B cell (primary cell): ENCODE measurements at regions of chr19 and their contacts with region 1.

Region 1: GRCh38 chr19:2289714-2290435 is 7.9 kb upstream of the PEAK3 start:
- DNase-seq: peak; percentile 92
- ATAC-seq: peak; percentile 69
- H3K4me3 ChIP-seq: peak overlapping the region; percentile 30 to 82 (median 71)
- H3K4me3 Mint-ChIP-seq: peak overlapping the region; percentile 97
- H3K27ac ChIP-seq: peak overlapping the region; percentile 75 to 81
- H3K27ac Mint-ChIP-seq: peak overlapping the region; percentile 87
- H3K4me1 ChIP-seq: peaks cover 46 to 62% of the 10 kb centered on the region in 2 donors
- H3K4me1 Mint-ChIP-seq: peaks cover 51% of the 10 kb centered on the region
- H3K27me3 ChIP-seq: no peaks in the 10 kb centered on the region
- H3K27me3 Mint-ChIP-seq: no peaks in the 10 kb centered on the region
- CTCF ChIP-seq: no peak

Region 2: GRCh38 chr19:2253106-2254053 is 36.5 kb before region 1 on chr19:
- CTCF ChIA-PET with region 1: interaction called, 8 read pairs
- POLR2A ChIA-PET with region 1: interaction called, 10 read pairs
- intact Hi-C with region 1: loop called (anchors 5 kb)
- DNase-seq: peak; percentile 77
- ATAC-seq: peak; percentile 40
- H3K4me3 ChIP-seq: peak overlapping the region; percentile 30 to 70 (median 55)
- H3K4me3 Mint-ChIP-seq: peak overlapping the region; percentile 88
- H3K27ac ChIP-seq: no peak overlapping the region
- H3K27ac Mint-ChIP-seq: peak overlapping the region; percentile 65
- H3K4me1 ChIP-seq: peaks cover 54 to 68% of the 10 kb centered on the region in 2 donors
- H3K4me1 Mint-ChIP-seq: peaks cover 43% of the 10 kb centered on the region
- H3K27me3 ChIP-seq: peaks cover 0 to 38% (median 14%) of the 10 kb centered on the region in 4 experiments
- H3K27me3 Mint-ChIP-seq: no peaks in the 10 kb centered on the region
- CTCF ChIP-seq: peak; percentile 63

Region 3: GRCh38 chr19:2274931-2275535 is 14.8 kb before region 1 on chr19:
- CTCF ChIA-PET with region 1: interaction called, 30 read pairs
- POLR2A ChIA-PET with region 1: interaction called, 65 read pairs
- intact Hi-C with region 1: loop called (anchors 2 kb)
- DNase-seq: peak; percentile 75
- ATAC-seq: no peak
- H3K4me3 ChIP-seq: no peak overlapping the region
- H3K4me3 Mint-ChIP-seq: peak overlapping the region; percentile 59
- H3K27ac ChIP-seq: peak overlapping the region; percentile 18 to 41
- H3K27ac Mint-ChIP-seq: peak overlapping the region; percentile 84
- H3K4me1 ChIP-seq: peaks cover 37 to 53% of the 10 kb centered on the region in 2 donors
- H3K4me1 Mint-ChIP-seq: peaks cover 46% of the 10 kb centered on the region
- H3K27me3 ChIP-seq: no peaks in the 10 kb centered on the region
- H3K27me3 Mint-ChIP-seq: no peaks in the 10 kb centered on the region
- CTCF ChIP-seq: peak; percentile 48

Region 4: DNA sequence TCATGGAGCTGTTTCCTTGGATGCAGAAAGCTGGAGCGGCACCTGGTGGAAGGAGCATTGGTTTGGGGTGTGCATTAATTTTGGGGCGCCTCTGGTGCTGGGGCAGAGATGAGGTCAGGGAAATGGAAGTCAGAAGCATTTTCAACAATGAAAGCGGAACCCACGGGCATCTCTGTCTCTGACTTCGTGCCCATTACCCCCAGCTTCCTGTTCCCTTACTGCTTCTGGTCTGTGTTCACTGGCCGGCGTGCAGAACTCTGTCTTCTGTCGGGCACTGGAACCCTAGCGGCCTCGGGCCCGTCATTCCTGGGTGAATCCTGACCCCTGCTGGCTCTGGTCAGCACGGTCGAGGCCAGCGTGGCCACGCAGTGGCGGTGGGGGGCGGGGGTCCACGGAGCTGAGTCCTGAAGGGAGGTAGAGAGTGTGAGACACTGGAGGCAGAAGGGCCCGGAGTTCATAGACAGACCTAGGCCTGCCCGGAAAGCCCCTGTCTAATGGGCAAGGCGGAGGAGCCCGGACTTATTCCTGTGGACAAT is 26.0 kb after region 1 on chr19:
- CTCF ChIA-PET with region 1: interaction called, 7 read pairs
- POLR2A ChIA-PET with region 1: interaction called, 17 read pairs
- intact Hi-C with region 1: no loop called
- DNase-seq: peak; percentile 74
- ATAC-seq: peak; percentile 75
- H3K4me3 ChIP-seq: peak overlapping the region in 1 of 5 experiments; percentile 19
- H3K4me3 Mint-ChIP-seq: peak overlapping the region; percentile 74
- H3K27ac ChIP-seq: peak overlapping the region; percentile 62 to 75
- H3K27ac Mint-ChIP-seq: peak overlapping the region; percentile 93
- H3K4me1 ChIP-seq: peaks cover 46 to 55% of the 10 kb centered on the region in 2 donors
- H3K4me1 Mint-ChIP-seq: peaks cover 51% of the 10 kb centered on the region
- H3K27me3 ChIP-seq: peaks cover 0 to 10% (median 3%) of the 10 kb centered on the region in 4 experiments
- H3K27me3 Mint-ChIP-seq: no peaks in the 10 kb centered on the region
- CTCF ChIP-seq: no peak

Region 5: GRCh38 chr19:2561895-2562294 is 272.0 kb after region 1 on chr19:
- CTCF ChIA-PET with region 1: no interaction called
- POLR2A ChIA-PET with region 1: interaction called, 10 read pairs
- intact Hi-C with region 1: no loop called
- DNase-seq: peak; percentile 82
- ATAC-seq: peak; percentile 94
- H3K4me3 ChIP-seq: peak overlapping the region in 4 of 5 experiments; percentile 42 to 63 (median 56)
- H3K4me3 Mint-ChIP-seq: peak overlapping the region; percentile 89
- H3K27ac ChIP-seq: peak overlapping the region; percentile 65 to 81
- H3K27ac Mint-ChIP-seq: peak overlapping the region; percentile 91
- H3K4me1 ChIP-seq: peaks cover 16 to 33% of the 10 kb centered on the region in 2 donors
- H3K4me1 Mint-ChIP-seq: peaks cover 45% of the 10 kb centered on the region
- H3K27me3 ChIP-seq: no peaks in the 10 kb centered on the region
- H3K27me3 Mint-ChIP-seq: no peaks in the 10 kb centered on the region
- CTCF ChIP-seq: no peak